Heart left ventricle (tissue), 16 donors: ENCODE measurements at regions of chr3 and their contacts with region 1.

Region 1: DNA sequence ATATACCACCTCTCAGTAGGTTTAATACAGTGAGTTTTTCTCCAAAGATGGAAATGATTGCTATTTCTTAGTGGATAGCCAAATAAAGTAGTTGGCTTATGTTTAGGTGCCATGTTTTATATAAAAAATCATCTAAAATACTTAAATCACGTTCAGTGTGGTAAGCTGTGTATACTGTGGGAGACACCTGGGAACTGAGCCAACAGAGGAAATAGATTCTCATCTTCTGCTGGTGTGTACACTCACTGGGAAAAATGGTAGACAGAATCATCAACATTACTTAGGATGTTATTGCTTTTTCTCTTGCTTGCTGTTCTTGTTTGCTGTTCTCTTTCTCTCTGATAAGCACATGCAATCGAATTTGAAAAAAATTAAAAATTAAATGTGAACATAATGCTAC is 112.6 kb upstream of the MB21D2 start:
- DNase-seq: no peak
- ATAC-seq: no peak
- H3K4me3 ChIP-seq: no peak overlapping the region
- H3K27ac ChIP-seq: no peak overlapping the region
- H3K4me1 ChIP-seq: no peaks in the 10 kb centered on the region
- H3K27me3 ChIP-seq: no peaks in the 10 kb centered on the region
- CTCF ChIP-seq: no peak
- POLR2A ChIP-seq: no peak

Region 2: GRCh38 chr3:192929755-192930547 is 100.3 kb before region 1 on chr3:
- intact Hi-C with region 1: loop called in 1 of 10 experiments (anchors 10 kb)
- DNase-seq: no peak
- ATAC-seq: peak in 2 of 4 donors; percentile 36 to 45
- H3K4me3 ChIP-seq: no peak overlapping the region
- H3K27ac ChIP-seq: peak overlapping the region in 1 of 12 donors; percentile 61
- H3K4me1 ChIP-seq: peaks cover 0 to 10% (median 0%) of the 10 kb centered on the region in 12 donors
- H3K27me3 ChIP-seq: no peaks in the 10 kb centered on the region
- CTCF ChIP-seq: no peak
- POLR2A ChIP-seq: no peak

Region 3: GRCh38 chr3:193068365-193068764 is 38.1 kb after region 1 on chr3:
- intact Hi-C with region 1: no loop called
- DNase-seq: no peak
- ATAC-seq: no peak
- H3K4me3 ChIP-seq: no peak overlapping the region
- H3K27ac ChIP-seq: no peak overlapping the region
- H3K4me1 ChIP-seq: no peaks in the 10 kb centered on the region
- H3K27me3 ChIP-seq: no peaks in the 10 kb centered on the region
- CTCF ChIP-seq: no peak
- POLR2A ChIP-seq: no peak